A673 (cell line): ENCODE measurements at regions of chr5 and their contacts with region 1.

Region 1: DNA sequence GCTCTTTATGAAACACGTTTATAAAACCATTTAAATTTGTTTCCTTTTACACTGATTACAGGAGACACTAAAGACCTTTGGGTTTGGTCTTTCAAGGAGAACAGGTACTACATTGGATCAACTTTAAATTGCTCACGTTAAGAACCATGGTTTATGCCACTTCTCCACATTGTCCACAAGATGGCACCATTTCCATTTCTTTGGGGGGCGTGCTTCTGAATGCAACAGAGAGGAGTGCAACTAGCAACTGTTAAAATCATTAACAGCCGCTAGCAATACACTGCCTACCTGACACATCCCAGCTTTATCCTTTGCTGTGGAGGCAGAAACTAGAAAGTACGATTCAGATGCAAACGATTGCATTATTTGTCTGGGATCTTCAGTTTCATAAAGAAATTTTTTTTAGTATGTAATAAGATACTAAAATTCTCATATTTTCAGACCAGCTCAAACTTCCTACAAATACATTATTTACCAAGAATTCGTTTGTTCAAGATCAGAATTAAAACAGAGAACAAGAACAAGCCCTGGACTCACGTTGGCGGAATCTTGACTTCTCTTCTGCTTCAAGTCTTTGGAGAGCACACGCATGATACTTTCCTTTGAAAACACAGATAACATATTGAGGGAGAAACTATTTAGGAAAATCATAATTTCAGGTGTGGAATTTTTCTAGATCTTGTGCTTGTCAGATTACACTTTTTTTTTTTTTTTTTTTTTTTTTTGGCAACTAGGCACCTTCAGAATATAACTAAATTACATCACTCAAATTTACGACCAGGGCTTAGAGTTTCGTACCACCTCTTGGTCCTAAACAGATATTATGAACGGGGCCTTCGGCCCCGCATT is 702 bp downstream of the CDC20B start:
- DNase-seq: peak; percentile 92
- H3K4me3 ChIP-seq: peak overlapping the region; percentile 48
- H3K27ac ChIP-seq: no peak overlapping the region
- H3K4me1 ChIP-seq: peaks cover 24% of the 10 kb centered on the region
- H3K27me3 ChIP-seq: peaks cover 23% of the 10 kb centered on the region
- CTCF ChIP-seq: peak; percentile 85

Region 2: GRCh38 chr5:54344653-54345052 is 827.6 kb before region 1 on chr5:
- CTCF ChIA-PET with region 1: no interaction called
- POLR2A ChIA-PET with region 1: no interaction called
- intact Hi-C with region 1: no loop called
- DNase-seq: no peak
- H3K4me3 ChIP-seq: no peak overlapping the region
- H3K27ac ChIP-seq: no peak overlapping the region
- H3K4me1 ChIP-seq: no peaks in the 10 kb centered on the region
- H3K27me3 ChIP-seq: no peaks in the 10 kb centered on the region
- CTCF ChIP-seq: no peak

Region 3: GRCh38 chr5:55036477-55036876 is 135.8 kb before region 1 on chr5:
- CTCF ChIA-PET with region 1: no interaction called
- POLR2A ChIA-PET with region 1: no interaction called
- intact Hi-C with region 1: no loop called
- DNase-seq: no peak
- H3K4me3 ChIP-seq: no peak overlapping the region
- H3K27ac ChIP-seq: no peak overlapping the region
- H3K4me1 ChIP-seq: no peaks in the 10 kb centered on the region
- H3K27me3 ChIP-seq: peaks cover 3% of the 10 kb centered on the region
- CTCF ChIP-seq: no peak

Region 4: GRCh38 chr5:55226027-55226933 is 54.0 kb after region 1 on chr5:
- CTCF ChIA-PET with region 1: no interaction called
- POLR2A ChIA-PET with region 1: no interaction called
- intact Hi-C with region 1: loop called (anchors 2 kb)
- DNase-seq: peak; percentile 89
- H3K4me3 ChIP-seq: peak overlapping the region; percentile 64
- H3K27ac ChIP-seq: no peak overlapping the region
- H3K4me1 ChIP-seq: peaks cover 1% of the 10 kb centered on the region
- H3K27me3 ChIP-seq: peaks cover 10% of the 10 kb centered on the region
- CTCF ChIP-seq: peak; percentile 92

Region 5: DNA sequence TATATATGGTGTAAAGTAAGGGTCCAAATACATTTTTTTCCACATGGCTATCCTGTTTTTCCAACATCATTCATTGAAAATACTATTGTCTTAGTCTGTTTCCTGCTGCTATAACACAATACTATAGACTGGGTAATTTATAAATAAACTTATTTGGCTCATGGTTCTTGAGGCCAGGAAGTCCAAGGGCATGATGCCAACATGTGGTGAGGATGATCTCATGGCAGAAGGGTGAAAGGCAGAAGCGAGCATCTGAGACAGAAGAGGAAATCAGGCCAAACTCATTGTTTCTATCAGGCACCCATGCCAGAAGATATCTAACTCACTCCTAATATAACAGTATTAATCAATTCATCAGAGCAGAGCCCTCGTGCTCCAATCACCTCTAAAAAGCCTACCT is 1018.2 kb after region 1 on chr5:
- CTCF ChIA-PET with region 1: no interaction called
- POLR2A ChIA-PET with region 1: no interaction called
- intact Hi-C with region 1: loop called (anchors 5 kb)
- DNase-seq: peak; percentile 19
- H3K4me3 ChIP-seq: no peak overlapping the region
- H3K27ac ChIP-seq: no peak overlapping the region
- H3K4me1 ChIP-seq: no peaks in the 10 kb centered on the region
- H3K27me3 ChIP-seq: no peaks in the 10 kb centered on the region
- CTCF ChIP-seq: no peak

Region 6: DNA sequence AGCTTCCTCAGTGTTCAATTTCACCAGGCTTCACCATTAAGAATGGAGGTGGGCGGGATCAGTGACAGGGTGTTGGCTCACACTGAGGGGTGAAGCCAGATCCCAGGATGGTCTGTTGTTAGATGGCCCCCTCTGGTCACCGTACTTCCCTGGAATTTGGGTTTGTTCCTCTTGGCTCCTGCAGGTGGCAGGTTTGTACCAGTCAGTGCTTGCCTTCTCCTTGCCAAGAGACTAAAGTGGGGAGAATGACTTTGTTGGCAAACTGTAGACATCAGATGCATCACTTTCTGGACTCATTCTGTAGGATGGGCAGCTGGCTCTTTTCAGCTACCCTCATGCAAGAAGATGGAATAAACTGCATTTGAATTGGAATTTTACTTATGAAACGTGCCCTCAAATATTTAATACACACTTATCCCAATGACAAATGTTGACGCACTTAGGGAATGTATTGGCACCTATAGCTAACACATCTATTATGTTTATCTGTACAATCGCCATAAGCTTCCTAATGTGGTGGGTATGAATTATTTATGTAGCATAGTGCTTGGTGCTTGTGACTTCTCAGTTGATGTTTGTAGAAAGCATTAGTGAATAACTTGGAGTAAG is 1092.2 kb after region 1 on chr5:
- CTCF ChIA-PET with region 1: no interaction called
- POLR2A ChIA-PET with region 1: no interaction called
- intact Hi-C with region 1: loop called (anchors 2 kb)
- DNase-seq: peak; percentile 70
- H3K4me3 ChIP-seq: no peak overlapping the region
- H3K27ac ChIP-seq: no peak overlapping the region
- H3K4me1 ChIP-seq: no peaks in the 10 kb centered on the region
- H3K27me3 ChIP-seq: no peaks in the 10 kb centered on the region
- CTCF ChIP-seq: peak; percentile 75